CD8-positive, alpha-beta T cell (primary cell): ENCODE measurements at regions of chr6 and their contacts with region 1.

Region 1: DNA sequence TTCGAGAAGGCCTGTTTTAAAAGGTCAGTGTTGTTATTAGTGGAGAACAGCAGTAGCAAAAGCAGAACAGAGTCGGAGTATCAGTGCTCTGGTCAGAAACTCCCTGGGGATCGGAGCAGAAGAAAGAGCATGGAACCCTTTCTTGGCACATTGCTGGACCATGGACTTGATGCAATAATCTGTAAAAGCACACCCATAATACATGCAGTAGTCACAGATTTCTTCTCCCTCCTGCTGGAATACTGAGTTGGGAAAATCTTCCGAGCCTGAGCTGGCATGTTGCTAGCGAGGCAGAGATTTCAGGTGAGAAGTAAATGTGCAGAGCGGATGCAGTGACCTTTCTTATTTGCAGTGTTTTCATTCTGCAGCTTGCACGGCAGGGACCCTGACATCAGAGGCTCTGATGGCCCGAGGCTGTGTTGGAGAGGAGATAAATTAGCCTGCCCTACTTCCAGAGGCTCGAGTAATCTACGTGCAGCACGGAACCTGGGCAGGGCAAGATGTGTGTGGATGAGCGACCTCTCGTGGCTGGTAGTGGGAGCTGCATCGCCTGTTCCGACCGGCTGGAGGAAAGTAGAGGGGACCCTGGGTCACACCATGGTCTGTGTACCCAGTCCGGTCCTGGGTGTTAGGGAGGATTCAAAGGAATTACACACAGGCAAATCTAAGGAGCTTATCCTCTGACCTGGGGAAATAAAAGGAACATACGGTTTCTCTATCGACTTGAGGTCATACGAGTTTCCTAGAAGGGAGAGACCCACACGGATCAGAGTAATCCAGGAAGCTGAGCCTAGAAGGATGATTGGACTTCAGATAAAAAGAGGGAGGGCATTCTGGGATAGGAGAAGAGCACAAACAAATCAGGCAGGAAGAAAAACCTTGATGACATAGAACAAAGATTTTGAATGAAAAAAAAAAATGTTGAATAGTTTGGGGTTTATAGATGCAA is 137.0 kb upstream of the STMND1 start:
- DNase-seq: peak; percentile 34 to 72 (median 59)
- ATAC-seq: peak; percentile 92
- H3K4me3 ChIP-seq: no peak overlapping the region
- H3K4me3 Mint-ChIP-seq: no peak overlapping the region
- H3K27ac ChIP-seq: no peak overlapping the region
- H3K27ac Mint-ChIP-seq: no peak overlapping the region
- H3K4me1 ChIP-seq: peaks cover 4% of the 10 kb centered on the region
- H3K4me1 Mint-ChIP-seq: peaks cover 6% of the 10 kb centered on the region
- H3K27me3 ChIP-seq: no peaks in the 10 kb centered on the region
- H3K27me3 Mint-ChIP-seq: peaks cover 14% of the 10 kb centered on the region
- CTCF ChIP-seq: peak; percentile 67

Region 2: DNA sequence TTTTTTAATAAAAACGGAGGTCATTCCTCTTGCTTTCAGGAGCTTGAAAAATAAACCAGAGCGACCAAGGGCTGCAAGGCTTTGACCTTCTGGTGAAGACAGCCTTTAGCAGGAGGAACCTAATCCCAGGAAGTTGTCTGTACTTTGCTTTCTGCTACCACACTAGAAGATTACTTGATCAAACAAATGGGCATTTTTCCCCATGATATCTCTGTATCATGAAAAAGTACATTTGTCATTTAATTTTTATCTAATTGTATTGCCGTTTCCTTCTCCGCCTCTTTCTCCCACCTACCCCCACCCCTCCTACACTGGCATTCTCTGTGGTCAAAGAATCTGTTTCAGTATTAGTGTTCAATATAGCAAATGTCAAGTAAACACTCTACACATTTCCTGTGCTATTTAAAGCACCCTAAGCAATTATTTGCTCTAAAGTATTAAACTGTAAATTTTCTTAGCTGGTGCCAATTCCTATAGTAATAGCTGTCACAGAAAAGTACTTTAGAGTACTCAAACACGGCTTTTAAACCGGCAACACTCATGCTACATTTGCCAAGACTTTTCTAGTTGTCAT is 233.3 kb before region 1 on chr6:
- CTCF ChIA-PET with region 1: interaction called, 3 read pairs
- POLR2A ChIA-PET with region 1: no interaction called
- intact Hi-C with region 1: loop called in 1 of 2 experiments (anchors 10 kb)
- DNase-seq: peak in 3 of 9 experiments; percentile 32 to 74 (median 43)
- ATAC-seq: peak; percentile 64
- H3K4me3 ChIP-seq: peak overlapping the region in 1 of 2 experiments; percentile 39
- H3K4me3 Mint-ChIP-seq: peak overlapping the region; percentile 64
- H3K27ac ChIP-seq: peak overlapping the region in 1 of 2 experiments; percentile 77
- H3K27ac Mint-ChIP-seq: peak overlapping the region; percentile 82
- H3K4me1 ChIP-seq: no peaks in the 10 kb centered on the region
- H3K4me1 Mint-ChIP-seq: peaks cover 45% of the 10 kb centered on the region
- H3K27me3 ChIP-seq: no peaks in the 10 kb centered on the region
- H3K27me3 Mint-ChIP-seq: no peaks in the 10 kb centered on the region
- CTCF ChIP-seq: no peak